AG04449 (cell line): ENCODE measurements at regions of chr3 and their contacts with region 1.

Region 1: GRCh38 chr3:184513276-184514170 is 48.1 kb upstream of the EPHB3 start:
- DNase-seq: no peak
- H3K4me3 ChIP-seq: peak overlapping the region; percentile 52
- CTCF ChIP-seq: peak; percentile 84

Region 2: DNA sequence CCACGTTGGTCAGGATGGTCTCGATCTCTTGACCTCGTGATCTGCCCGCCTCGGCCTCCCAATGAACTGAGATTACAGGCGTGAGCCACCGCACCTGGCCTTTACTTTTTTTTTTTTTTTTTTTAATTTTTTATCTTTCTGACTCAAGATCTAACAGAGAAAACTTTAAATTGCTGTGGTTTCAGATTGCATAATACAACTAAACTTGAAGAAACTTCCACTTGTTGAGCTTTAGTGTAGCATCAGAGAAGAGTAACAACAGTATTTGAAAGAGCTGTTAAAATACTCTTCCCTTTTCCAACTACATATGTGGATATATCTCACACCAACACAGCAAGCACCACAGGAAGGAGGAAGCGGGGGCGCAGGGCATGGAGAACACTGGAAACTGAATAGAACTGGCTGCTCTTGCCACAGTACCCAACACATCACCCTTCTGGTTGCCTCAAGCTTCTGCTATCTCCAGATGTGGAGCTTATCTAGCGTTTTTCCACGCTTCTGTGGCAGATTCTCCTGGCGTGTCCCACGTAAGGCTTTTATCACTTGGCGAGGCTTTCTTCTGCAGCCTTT is 733.5 kb before region 1 on chr3:
- CTCF ChIA-PET with region 1: no interaction called
- POLR2A ChIA-PET with region 1: no interaction called
- DNase-seq: no peak
- H3K4me3 ChIP-seq: no peak overlapping the region
- CTCF ChIP-seq: no peak

Region 3: DNA sequence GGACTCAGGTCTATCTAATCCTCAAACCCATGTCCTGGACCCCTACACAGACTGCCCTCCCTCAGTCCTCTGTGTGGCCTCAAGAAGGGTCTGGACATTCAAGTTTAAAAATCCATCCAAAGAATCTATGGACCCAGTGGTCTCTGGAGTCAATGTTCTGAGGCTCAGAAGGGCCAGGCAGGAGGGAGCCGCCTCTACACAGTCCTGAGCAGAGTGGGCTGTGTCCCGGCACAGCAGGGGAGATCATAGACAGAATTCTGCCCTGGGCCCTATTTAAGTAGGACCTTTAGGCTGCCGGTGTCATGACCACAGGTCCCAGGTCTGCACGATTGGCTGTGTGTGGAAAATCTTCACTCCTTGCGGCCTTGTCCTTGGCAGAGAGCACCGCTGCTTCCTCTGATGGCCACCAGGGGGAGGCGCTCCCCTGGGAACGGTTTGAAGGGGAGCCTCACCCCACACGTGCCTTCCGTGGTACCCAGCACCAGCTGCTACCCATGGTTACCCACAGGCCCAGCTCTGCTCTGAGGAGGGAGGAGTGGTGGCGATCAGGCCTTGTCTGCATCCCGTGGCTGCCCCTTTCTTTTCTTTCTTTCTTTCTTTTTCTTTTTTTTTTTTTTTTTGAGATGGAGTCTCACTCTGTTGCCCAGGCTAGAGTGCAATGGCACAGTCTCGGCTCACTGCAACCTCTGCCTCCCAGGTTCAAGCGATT is 95.8 kb before region 1 on chr3:
- CTCF ChIA-PET with region 1: interaction called, 107 read pairs
- POLR2A ChIA-PET with region 1: no interaction called
- DNase-seq: no peak
- H3K4me3 ChIP-seq: no peak overlapping the region
- CTCF ChIP-seq: peak; percentile 99

Region 4: DNA sequence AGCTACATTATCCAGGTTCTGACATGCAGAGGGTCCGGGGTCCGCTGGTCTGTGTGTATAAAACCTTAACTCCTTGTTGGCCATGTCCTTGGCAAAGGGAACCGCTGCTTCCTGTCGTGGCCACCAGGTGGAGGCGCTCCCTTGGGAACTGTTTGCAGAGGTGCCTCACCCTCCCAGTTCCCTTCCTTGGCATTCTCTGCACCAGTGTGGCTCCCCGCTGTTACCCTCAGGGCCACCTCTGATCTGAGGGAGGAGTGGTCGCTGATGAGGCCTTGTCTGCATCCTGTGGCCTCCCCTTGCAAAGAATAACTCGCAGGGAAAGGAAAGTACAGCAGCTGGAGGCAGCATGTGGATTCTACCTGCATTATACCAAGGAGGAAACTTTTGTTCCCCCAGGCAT is 44.1 kb before region 1 on chr3:
- CTCF ChIA-PET with region 1: interaction called, 60 read pairs
- POLR2A ChIA-PET with region 1: no interaction called
- DNase-seq: no peak
- H3K4me3 ChIP-seq: no peak overlapping the region
- CTCF ChIP-seq: peak; percentile 58

Region 5: GRCh38 chr3:184523825-184524615 is 10.5 kb after region 1 on chr3:
- CTCF ChIA-PET with region 1: interaction called, 67 read pairs
- POLR2A ChIA-PET with region 1: no interaction called
- DNase-seq: no peak
- H3K4me3 ChIP-seq: no peak overlapping the region
- CTCF ChIP-seq: no peak